ENCODE measurements at regions of chr2 and their contacts with region 1.

Region 1: GRCh38 chr2:99559075-99559662 is 69.4 kb upstream of the REV1 start:
- DNase-seq: peak; percentile 29
- H3K4me3 ChIP-seq: no peak overlapping the region
- H3K27ac ChIP-seq: no peak overlapping the region
- H3K4me1 ChIP-seq: no peaks in the 10 kb centered on the region
- H3K27me3 ChIP-seq: peaks cover 0 to 11% (median 0%) of the 10 kb centered on the region in 4 donors
- CTCF ChIP-seq: peak; percentile 96 to 99 (median 98)
- POLR2A ChIP-seq: no peak

Region 2: DNA sequence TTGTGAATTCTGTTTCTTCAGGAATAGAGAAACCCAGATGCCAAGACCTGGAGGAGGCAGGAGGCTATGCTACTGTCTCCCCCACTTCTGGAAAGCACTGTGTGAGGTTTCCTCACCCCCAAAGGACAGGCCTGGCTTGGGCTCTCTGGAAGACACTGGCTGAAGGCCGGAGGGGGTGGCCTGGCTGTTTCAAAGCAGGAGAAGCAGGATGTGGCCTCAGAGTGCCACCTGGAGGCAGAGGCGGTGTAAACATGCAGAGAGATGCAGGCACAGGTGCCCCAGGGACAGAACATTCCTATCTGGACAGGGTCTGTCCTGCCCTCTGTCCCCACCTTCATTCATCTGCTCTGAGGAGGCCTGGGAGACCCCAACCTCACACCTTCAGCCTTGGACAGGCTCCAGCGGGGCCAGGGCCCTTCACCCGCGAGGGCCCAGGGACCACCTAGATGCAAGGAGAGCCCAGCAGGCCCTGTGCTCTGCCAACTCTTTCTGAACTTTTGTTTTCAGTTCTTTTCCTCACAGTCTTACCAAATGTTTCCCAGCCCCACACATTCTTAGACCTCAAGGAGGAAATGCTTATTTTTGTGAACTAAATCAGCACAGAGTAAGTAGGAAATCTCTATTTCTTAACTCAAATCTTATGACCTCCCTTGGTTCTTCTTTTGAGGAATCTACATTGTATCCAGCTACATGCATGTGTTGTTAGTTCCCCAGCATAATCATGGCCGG is 683.9 kb after region 1 on chr2:
- intact Hi-C with region 1: loop called (anchors 5 kb)
- DNase-seq: no peak
- H3K4me3 ChIP-seq: no peak overlapping the region
- H3K27ac ChIP-seq: no peak overlapping the region
- H3K4me1 ChIP-seq: peaks cover 0 to 5% (median 0%) of the 10 kb centered on the region in 3 donors
- H3K27me3 ChIP-seq: peaks cover 0 to 9% (median 0%) of the 10 kb centered on the region in 4 donors
- CTCF ChIP-seq: peak; percentile 35 to 70 (median 50)
- POLR2A ChIP-seq: no peak